Panc1 (cell line): ENCODE measurements at regions of chr4 and their contacts with region 1.

Region 1: DNA sequence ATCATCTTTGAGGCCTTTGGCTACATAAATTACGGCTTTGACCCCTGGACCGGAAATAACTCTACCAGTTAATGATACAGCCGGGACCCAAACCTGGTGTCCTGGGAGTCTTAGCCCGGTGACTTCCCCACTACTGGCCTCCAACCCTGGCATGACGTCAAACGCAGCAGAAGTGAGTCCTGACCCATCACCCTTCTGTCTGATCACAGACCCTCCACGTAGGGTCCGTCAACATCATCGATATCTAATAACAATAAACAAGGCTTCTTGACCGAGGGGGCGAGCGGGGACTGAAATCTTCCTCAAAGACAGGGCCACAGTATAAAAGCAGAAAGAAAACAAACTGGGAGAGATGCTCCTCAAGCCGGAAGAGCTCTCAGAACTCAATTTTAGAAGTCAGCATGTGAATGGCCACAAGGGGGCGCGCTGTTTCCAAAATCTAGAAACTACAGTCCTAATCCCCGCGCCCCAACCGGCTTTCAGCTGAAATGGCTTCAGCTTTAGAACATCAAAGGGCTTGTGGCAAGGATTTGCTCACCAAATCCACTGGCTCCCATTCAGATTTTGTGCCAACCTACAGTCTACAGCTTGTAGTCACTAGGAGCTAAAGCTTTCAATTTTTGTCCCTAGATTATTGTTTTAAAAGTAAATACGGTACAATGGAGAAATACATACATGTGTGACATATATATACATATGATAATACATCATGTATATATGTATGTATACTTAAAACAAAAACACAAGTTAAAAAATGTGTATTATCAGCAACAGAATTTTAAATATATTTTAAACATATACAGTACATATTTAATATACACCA is 46.4 kb upstream of the ENPP6 start:
- DNase-seq: peak; percentile 62
- ATAC-seq: peak; percentile 73
- H3K4me3 ChIP-seq: no peak overlapping the region
- H3K27ac ChIP-seq: no peak overlapping the region
- H3K4me1 ChIP-seq: peaks cover 16% of the 10 kb centered on the region
- H3K27me3 ChIP-seq: no peaks in the 10 kb centered on the region
- CTCF ChIP-seq: peak; percentile 81

Region 2: DNA sequence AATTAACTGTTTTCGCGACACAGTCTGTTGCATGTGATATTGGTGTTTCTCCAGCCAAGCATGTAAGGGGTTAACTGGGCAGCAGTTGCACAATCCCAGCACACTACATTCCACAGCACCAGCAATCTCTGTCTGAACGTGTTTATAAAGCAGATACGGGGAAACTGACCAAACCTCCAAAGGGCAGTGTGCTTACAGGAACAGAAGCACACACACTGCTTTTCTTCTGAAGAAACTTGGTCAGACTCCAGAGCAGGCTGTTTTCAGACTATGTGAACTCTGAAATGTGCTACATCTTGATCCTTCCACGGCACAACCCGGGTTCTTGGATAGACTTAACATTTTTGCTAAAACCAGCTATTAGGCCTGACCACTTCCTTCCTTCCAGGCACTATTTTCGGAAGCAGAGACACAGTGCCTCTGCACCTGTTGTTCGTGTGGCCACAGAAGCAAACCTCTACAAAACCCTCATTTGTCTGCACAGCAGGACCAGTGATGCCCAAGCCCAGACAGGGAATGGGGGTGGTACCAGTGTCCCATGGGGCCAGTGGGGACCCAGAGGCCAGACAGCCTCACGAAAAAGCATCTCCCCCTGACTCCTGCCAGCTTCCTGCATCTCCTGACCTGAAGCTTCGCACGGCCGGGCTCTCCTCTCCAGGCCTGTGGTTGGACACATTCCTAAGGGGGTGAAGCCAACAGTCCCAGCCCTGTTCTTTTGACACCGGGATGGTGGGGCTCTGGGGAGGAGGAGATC is 120.1 kb after region 1 on chr4:
- CTCF ChIA-PET with region 1: no interaction called
- POLR2A ChIA-PET with region 1: no interaction called
- in situ Hi-C with region 1: no loop called
- intact Hi-C with region 1: loop called (anchors 10 kb)
- DNase-seq: peak; percentile 2
- ATAC-seq: peak; percentile 81; the same call in 1 of the 2 replicates
- H3K4me3 ChIP-seq: peak overlapping the region; percentile 29 to 37
- H3K27ac ChIP-seq: peak overlapping the region; percentile 79
- H3K4me1 ChIP-seq: peaks cover 39% of the 10 kb centered on the region
- H3K27me3 ChIP-seq: no peaks in the 10 kb centered on the region
- CTCF ChIP-seq: no peak

Region 3: GRCh38 chr4:184538023-184538599 is 274.0 kb after region 1 on chr4:
- CTCF ChIA-PET with region 1: interaction called, 5 read pairs
- POLR2A ChIA-PET with region 1: no interaction called
- in situ Hi-C with region 1: no loop called
- intact Hi-C with region 1: loop called (anchors 1 kb)
- DNase-seq: peak; percentile 74
- ATAC-seq: peak; percentile 95
- H3K4me3 ChIP-seq: peak overlapping the region; percentile 74 to 85
- H3K27ac ChIP-seq: peak overlapping the region; percentile 90
- H3K4me1 ChIP-seq: peaks cover 7% of the 10 kb centered on the region; the same call in 1 of the 2 replicates
- H3K27me3 ChIP-seq: no peaks in the 10 kb centered on the region
- CTCF ChIP-seq: peak; percentile 75